ENCODE measurements at regions of chr3 and their contacts with region 1.

Region 1: DNA sequence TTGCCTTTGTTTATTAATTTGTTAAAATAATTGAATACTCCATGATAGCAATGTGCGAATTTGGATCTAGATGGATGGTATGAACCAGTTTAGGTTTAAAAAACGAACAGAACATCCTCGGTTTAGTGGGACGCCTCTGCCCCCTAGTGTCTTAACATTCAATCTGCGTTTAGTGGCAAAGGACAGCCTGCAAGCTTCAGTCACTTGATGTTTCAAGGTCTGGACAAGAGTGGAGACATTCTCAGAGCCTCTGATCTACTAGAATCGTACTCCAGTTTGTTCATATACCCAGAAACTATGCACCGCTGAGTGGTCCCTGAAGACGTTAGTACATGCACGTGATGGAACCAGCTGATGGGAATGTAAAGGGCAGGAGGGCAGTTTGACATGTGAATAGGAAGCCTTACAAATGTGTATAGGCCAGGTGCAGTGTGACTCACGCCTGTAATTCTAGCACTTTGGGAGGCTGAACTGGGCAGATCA is 17.8 kb upstream of the ATP13A4 start:
- DNase-seq: peak; percentile 75
- H3K4me3 ChIP-seq: no peak overlapping the region
- H3K27ac ChIP-seq: no peak overlapping the region
- H3K4me1 ChIP-seq: no peaks in the 10 kb centered on the region
- H3K27me3 ChIP-seq: no peaks in the 10 kb centered on the region
- CTCF ChIP-seq: peak; percentile 68

Region 2: DNA sequence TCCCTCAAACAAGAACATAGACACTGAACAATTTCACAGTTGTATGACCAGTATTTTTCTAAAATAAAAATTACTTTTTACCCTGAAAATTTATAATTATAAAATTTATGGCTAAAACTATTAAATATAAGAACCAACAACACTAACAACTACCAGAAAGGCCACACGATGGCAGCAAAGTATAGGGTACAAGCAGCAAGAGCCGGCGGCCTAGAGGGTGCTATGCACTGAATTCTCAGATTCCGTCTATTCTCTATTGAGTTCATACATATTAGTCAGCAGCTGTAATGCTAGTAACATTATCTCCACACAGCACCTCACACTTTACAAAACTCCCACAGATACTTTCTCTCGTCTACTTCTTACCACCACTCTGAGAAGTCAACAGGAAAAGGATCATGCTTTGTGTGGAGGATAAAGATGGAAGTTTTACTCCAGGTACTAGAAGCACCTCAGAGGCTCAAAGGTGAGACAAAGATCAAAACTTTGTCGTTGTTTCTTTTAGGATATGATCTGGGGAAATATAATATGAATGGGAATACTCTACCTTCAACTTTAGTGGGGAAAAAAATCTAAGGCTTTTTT is 1005.7 kb before region 1 on chr3:
- intact Hi-C with region 1: loop called (anchors 5 kb)
- DNase-seq: peak; percentile 61
- H3K4me3 ChIP-seq: no peak overlapping the region
- H3K27ac ChIP-seq: no peak overlapping the region
- H3K4me1 ChIP-seq: no peaks in the 10 kb centered on the region
- H3K27me3 ChIP-seq: no peaks in the 10 kb centered on the region
- CTCF ChIP-seq: peak; percentile 44

Region 3: DNA sequence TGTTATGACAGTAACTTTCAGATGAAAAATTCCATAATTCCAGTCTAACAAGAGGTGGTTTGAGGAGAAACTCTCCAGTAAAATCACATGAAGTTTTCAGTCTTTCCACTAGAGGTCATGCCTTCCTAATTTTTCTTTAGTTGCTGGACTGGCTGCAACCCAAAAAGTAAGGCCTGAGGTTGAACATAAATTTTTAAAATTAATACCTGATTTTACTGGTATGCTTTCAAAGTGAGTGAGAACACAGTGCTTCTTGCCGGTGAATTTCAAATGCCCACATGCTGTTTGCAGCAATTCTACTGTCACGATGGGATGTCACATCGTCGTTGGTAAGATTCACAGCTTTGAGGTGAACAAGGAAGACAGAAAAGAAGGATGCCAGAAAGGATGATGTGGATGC is 756.1 kb before region 1 on chr3:
- intact Hi-C with region 1: loop called (anchors 5 kb)
- DNase-seq: no peak
- H3K4me3 ChIP-seq: no peak overlapping the region
- H3K27ac ChIP-seq: no peak overlapping the region
- H3K4me1 ChIP-seq: no peaks in the 10 kb centered on the region
- H3K27me3 ChIP-seq: no peaks in the 10 kb centered on the region
- CTCF ChIP-seq: peak; percentile 47

Region 4: GRCh38 chr3:193040836-193041672 is 531.4 kb before region 1 on chr3:
- intact Hi-C with region 1: loop called (anchors 10 kb)
- DNase-seq: no peak
- H3K4me3 ChIP-seq: no peak overlapping the region
- H3K27ac ChIP-seq: no peak overlapping the region
- H3K4me1 ChIP-seq: no peaks in the 10 kb centered on the region
- H3K27me3 ChIP-seq: no peaks in the 10 kb centered on the region
- CTCF ChIP-seq: peak; percentile 21

Region 5: GRCh38 chr3:193190146-193190786 is 382.2 kb before region 1 on chr3:
- intact Hi-C with region 1: loop called (anchors 5 kb)
- DNase-seq: peak; percentile 21
- H3K4me3 ChIP-seq: no peak overlapping the region
- H3K27ac ChIP-seq: no peak overlapping the region
- H3K4me1 ChIP-seq: no peaks in the 10 kb centered on the region
- H3K27me3 ChIP-seq: no peaks in the 10 kb centered on the region
- CTCF ChIP-seq: no peak

Region 6: GRCh38 chr3:193465992-193466608 is 106.4 kb before region 1 on chr3:
- intact Hi-C with region 1: loop called (anchors 2 kb)
- DNase-seq: peak; percentile 28
- H3K4me3 ChIP-seq: no peak overlapping the region
- H3K27ac ChIP-seq: peak overlapping the region; percentile 30
- H3K4me1 ChIP-seq: no peaks in the 10 kb centered on the region
- H3K27me3 ChIP-seq: no peaks in the 10 kb centered on the region
- CTCF ChIP-seq: no peak